ENCODE measurements at regions of chr22 and their contacts with region 1.

Region 1: GRCh38 chr22:44074337-44074984 is 50.4 kb downstream of the PARVB start:
- DNase-seq: no peak
- H3K4me3 ChIP-seq: no peak overlapping the region
- H3K27ac ChIP-seq: no peak overlapping the region
- H3K4me1 ChIP-seq: no peaks in the 10 kb centered on the region
- H3K27me3 ChIP-seq: no peaks in the 10 kb centered on the region
- CTCF ChIP-seq: no peak
- EP300 ChIP-seq: no peak
- POLR2A ChIP-seq: no peak

Region 2: GRCh38 chr22:43993027-43993760 is 81.3 kb before region 1 on chr22:
- intact Hi-C with region 1: loop called in 1 of 4 experiments (anchors 5 kb)
- DNase-seq: peak; percentile 51 to 78 (median 64)
- H3K4me3 ChIP-seq: no peak overlapping the region
- H3K27ac ChIP-seq: no peak overlapping the region
- H3K4me1 ChIP-seq: peaks cover under 1% of the 10 kb centered on the region
- H3K27me3 ChIP-seq: no peaks in the 10 kb centered on the region
- CTCF ChIP-seq: peak; percentile 84 to 89 (median 85)
- EP300 ChIP-seq: no peak
- POLR2A ChIP-seq: no peak

Region 3: DNA sequence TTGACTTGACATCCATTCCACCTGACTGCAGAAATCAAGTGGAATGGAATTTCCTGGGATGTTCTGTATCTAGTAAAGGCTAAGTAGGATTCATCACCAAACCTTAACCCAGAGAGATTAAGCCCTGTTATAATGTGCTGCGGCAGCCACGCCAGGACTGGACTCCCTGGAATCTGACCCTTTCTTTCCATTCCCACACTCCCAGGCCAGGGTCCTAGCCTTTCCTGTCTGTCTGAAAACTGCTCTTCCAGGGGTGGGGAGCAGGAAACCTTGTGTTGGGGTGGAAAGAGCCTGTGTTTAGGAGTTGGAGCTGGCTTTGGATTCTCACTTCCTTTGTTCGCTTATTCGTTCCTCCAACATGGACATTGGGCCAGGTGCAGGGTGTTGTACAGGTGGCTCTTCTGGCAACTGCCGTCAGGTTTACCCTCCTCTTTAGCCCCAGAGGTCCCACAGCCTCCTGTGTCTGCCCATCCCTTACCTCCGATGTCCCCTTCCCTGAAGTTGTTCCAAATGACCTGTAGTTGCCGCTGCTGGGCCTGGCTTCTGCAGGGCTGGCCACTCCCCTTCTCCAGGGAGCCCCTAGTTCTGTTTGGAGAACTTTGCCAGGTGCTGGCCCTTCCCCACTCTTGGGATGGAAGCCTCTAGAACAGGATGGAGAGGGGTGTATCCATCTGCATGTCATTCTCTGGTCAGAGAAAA is 70.9 kb before region 1 on chr22:
- intact Hi-C with region 1: loop called in 2 of 4 experiments (anchors 5 kb)
- DNase-seq: no peak
- H3K4me3 ChIP-seq: no peak overlapping the region
- H3K27ac ChIP-seq: no peak overlapping the region
- H3K4me1 ChIP-seq: peaks cover 19% of the 10 kb centered on the region
- H3K27me3 ChIP-seq: no peaks in the 10 kb centered on the region
- CTCF ChIP-seq: no peak
- EP300 ChIP-seq: no peak
- POLR2A ChIP-seq: no peak

Region 4: DNA sequence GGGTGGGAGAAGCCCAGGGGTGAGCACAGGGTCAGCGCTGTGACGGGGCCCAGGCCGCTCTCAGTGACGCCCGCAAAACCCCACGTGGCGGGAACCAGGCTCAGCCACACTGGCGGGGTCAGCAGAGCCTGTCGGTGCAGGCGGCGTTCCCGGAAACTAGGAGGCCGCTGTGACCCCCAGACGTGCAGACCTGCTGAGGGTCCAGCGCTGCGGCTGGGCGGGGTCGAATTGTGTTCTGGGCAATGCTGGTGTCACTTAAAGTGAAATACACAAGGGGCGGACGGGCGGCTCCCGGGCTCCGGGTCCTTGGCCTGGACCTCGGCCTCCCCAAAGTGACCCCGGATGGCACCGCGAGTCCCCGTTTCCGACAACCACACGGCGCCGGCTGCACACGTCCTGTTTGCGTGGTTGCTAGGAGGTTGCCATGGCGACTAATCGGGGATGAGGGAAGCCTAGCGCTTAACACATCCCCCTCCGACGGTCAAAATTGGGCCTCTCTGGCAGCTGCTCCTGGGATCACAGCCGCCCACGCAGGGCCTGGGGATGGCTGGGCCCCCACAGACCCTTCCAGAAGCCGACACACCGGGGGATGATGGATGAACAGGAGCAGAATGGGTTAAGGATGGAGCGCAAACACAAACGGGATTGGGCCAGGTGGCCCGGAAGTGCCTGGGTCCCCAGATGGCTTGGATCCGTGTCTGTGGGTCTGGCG is 545.8 kb after region 1 on chr22:
- intact Hi-C with region 1: loop called in 2 of 4 experiments (anchors 5 to 10 kb)
- DNase-seq: peak; percentile 40 to 74 (median 53)
- H3K4me3 ChIP-seq: no peak overlapping the region
- H3K27ac ChIP-seq: no peak overlapping the region
- H3K4me1 ChIP-seq: peaks cover 2% of the 10 kb centered on the region
- H3K27me3 ChIP-seq: no peaks in the 10 kb centered on the region
- CTCF ChIP-seq: no peak
- EP300 ChIP-seq: no peak
- POLR2A ChIP-seq: no peak

Region 5: DNA sequence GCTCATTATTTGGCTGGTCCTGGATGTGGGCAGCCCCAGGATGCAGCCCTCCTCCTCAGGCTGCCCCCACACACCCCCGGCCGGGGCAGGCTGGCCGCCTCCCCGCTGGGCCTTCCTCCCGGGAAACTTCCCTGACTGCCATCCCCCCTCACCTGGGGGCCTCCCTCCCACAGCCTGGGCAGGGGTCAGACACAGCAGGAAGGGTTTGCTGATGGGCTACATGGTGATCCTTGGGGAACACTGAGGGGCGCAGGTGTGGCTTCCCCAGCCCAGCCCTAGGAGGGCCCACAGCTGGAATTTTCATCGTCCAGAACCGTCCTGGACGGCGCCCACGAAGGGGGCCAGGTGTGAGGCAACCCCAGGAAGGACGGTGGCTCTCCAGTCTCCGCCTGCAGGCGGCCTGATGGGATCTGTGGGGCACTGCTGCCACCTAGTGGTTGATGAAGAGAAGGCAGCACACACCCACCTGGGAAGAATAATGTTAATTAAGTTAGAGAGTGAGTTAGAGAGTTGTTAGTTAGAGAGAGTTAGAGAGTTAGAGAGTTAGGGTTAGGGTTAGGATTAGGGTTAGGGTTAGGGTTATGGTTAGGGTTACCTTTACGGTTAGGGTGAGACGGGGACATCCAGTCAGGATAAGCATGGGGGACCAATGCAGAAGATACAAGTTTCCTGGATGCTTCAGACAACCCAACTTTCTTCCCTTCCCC is 551.7 kb after region 1 on chr22:
- intact Hi-C with region 1: loop called in 2 of 4 experiments (anchors 5 to 10 kb)
- DNase-seq: peak; percentile 64 to 84 (median 78)
- H3K4me3 ChIP-seq: no peak overlapping the region
- H3K27ac ChIP-seq: no peak overlapping the region
- H3K4me1 ChIP-seq: no peaks in the 10 kb centered on the region
- H3K27me3 ChIP-seq: no peaks in the 10 kb centered on the region
- CTCF ChIP-seq: peak; percentile 91 to 99 (median 99)
- EP300 ChIP-seq: no peak
- POLR2A ChIP-seq: no peak

Measured in ovary (tissue), 10 donors.